Activated CD4-positive, alpha-beta T cell treated with anti-CD3 and anti-CD28 coated beads, Interleukin-2, amount 10 ng/mL, durations not matched to agents 24 days and 14 days (primary cell): ENCODE measurements at regions of chr2 and their contacts with region 1.

Region 1: DNA sequence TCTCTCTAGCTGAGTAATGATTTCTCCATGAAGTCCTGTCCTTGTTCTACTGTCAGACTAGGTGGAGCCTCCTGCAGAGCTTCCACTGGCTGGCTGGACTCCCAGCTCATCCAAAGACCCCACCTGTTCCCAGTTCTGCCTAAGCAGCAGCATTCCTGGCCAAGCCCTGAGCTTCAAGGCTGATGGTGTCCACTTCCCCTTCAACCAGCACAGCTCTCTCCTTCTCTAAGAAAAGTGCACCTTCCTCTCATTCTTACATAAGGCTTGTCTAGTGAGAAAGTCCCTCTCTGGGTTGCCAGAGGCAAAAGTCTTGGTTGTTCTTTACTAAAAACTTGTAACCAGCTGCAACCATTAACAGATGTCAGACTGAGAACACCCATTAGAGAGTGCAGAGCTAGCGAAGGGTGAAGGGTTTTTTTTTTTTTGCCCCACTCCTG is 58.9 kb downstream of the CXCR4 start:
- DNase-seq: peak; percentile 60
- H3K4me3 Mint-ChIP-seq: peak overlapping the region; percentile 21
- H3K27ac Mint-ChIP-seq: peak overlapping the region; percentile 9
- H3K4me1 Mint-ChIP-seq: peaks cover 70% of the 10 kb centered on the region
- H3K27me3 Mint-ChIP-seq: no peaks in the 10 kb centered on the region

Region 2: GRCh38 chr2:135820003-135820618 is 238.9 kb before region 1 on chr2:
- intact Hi-C with region 1: loop called (anchors 5 kb)
- DNase-seq: peak; percentile 93
- H3K4me3 Mint-ChIP-seq: peak overlapping the region; percentile 74
- H3K27ac Mint-ChIP-seq: peak overlapping the region; percentile 83
- H3K4me1 Mint-ChIP-seq: peaks cover 44% of the 10 kb centered on the region
- H3K27me3 Mint-ChIP-seq: no peaks in the 10 kb centered on the region

Region 3: GRCh38 chr2:135960656-135961551 is 98.2 kb before region 1 on chr2:
- intact Hi-C with region 1: loop called (anchors 2 kb)
- DNase-seq: peak; percentile 83
- H3K4me3 Mint-ChIP-seq: peak overlapping the region; percentile 58
- H3K27ac Mint-ChIP-seq: peak overlapping the region; percentile 94
- H3K4me1 Mint-ChIP-seq: peaks cover 56% of the 10 kb centered on the region
- H3K27me3 Mint-ChIP-seq: no peaks in the 10 kb centered on the region

Region 4: DNA sequence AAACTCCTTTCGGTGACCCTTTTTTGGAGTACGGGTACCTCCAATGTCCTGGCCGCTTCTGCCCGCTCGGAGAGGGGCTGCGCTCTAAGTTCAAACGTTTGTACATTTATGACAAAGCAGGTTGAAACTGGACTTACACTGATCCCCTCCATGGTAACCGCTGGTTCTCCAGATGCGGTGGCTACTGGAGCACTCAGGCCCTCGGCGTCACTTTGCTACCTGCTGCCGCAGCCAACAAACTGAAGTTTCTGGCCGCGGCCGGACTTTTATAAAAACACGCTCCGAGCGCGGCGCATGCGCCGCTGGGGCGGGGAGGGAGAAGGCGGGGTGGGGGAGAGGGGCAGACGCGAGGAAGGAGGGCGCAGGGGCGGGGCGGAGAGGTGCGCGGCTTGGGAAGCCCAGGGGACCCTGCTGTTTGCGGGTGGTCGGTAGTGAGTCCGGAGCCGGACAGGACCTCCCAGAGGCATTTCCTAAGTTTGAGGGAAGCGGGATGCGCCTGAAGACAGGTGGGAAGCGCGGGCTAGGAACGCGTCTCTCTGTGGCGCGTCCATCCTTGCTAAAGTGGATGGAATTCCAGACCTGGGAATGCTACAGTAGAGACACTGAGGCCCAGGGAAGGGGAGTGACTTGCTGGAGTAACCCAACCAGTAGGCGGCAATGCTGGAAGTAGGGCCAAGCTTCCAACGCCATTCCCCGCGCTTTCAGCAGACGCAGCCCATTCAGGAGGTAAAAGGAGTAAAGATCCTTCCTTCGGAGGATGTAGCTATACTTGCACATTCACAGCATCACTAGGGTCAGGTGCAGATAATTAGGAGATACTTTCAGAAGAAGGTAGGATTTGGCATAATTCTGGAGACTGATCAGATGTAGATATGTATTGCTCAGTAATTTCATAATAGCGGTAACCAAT is 59.1 kb after region 1 on chr2 and contains the start of gene CXCR4:
- intact Hi-C with region 1: loop called (anchors 1 kb)
- DNase-seq: peak; percentile 97
- H3K4me3 Mint-ChIP-seq: peak within 1 kb of the TSS; percentile 98
- H3K27ac Mint-ChIP-seq: peak within 1 kb of the TSS; percentile 95
- H3K4me1 Mint-ChIP-seq: peaks cover 63% of the 10 kb centered on the region
- H3K27me3 Mint-ChIP-seq: peaks cover 35% of the 10 kb centered on the region
- total RNA-seq, gene CXCR4: 88.8 and 92.7 TPM in 2 replicates

Region 5: DNA sequence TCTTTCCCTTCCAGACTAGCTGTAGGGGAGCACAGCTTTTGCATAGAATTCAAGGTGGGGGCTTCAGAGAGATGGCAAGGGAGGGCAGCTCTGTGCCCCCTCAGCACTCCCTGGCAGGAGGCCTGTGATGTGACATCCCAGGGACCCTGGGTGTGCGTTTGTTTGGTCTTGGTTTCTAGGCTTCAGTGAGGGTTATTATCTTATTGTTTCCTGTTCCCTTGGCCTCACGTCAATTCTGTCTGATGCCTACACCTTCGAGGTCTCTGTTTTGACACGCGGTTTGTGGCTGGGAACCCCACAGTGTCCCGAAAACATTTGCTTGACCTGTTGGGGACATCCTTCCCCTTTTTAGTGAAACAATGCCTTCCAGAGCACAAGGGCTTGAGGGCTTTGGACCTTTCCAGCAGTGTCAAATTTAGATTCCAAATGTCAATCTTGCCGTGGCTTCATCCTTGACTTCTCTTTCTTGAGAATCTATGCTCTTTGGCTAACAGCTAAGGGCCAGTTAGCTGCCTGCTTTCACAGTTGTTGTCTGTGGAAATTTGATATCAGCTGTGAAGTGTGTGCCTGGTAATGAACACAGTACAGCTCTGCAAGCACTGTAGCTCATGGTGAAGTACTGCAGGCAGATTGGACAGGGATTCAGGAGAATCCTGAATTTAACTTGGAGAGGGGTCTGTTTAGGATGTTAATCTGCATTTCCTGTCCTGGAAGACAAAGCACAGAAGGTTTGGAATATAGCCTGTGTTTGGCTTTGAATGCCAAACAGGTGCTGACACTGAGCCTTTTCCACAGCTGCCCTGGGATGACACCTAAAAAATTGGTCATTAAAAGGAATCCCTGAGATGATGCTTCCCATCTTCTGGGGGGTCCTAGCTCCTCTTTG is 167.1 kb after region 1 on chr2:
- intact Hi-C with region 1: no loop called
- DNase-seq: no peak
- H3K4me3 Mint-ChIP-seq: no peak overlapping the region
- H3K27ac Mint-ChIP-seq: no peak overlapping the region
- H3K4me1 Mint-ChIP-seq: peaks cover 6% of the 10 kb centered on the region
- H3K27me3 Mint-ChIP-seq: peaks cover 24% of the 10 kb centered on the region

Region 6: DNA sequence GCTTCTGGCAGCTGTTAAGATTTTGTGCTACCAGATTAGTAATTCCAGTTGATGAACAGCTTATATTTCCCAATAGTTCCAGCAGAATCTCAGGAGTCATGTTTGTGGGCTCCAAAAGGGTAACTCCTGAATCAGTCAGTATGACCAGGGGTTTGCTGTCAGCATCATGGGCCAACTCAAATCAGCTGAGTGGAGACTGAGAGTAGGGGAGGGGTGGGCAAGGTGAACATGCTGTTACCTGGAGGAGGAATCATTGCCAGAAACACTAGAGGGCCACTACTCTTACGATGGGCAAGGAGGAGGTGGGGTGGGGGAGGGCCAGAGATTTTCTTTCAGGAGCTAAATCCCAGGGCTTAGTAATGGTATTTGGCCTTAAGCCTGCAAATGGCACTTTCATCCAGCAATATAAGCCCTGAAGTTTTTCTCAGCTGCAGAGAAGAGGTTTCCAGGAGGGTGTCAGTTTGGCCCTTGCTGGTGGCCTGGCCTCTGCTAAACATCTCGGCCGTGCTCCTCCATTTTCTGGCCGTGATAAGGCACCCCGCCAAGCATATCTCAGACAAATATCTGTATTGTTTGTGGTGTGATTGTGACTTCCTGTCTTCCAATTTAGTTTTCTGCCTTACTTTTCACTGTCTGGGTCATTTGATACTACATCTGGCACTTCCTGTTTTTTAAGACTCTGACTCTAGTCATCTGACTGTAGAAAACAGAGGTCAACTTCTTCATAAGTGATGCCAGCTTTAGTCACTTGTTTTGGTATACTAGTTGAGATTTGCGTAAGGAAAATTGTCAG is 179.4 kb after region 1 on chr2:
- intact Hi-C with region 1: loop called (anchors 2 kb)
- DNase-seq: peak; percentile 81
- H3K4me3 Mint-ChIP-seq: peak overlapping the region; percentile 43
- H3K27ac Mint-ChIP-seq: peak overlapping the region; percentile 89
- H3K4me1 Mint-ChIP-seq: peaks cover 45% of the 10 kb centered on the region
- H3K27me3 Mint-ChIP-seq: no peaks in the 10 kb centered on the region

Region 7: GRCh38 chr2:136362676-136363390 is 303.8 kb after region 1 on chr2:
- intact Hi-C with region 1: loop called (anchors 2 kb)
- DNase-seq: peak; percentile 75
- H3K4me3 Mint-ChIP-seq: peak overlapping the region; percentile 34
- H3K27ac Mint-ChIP-seq: peak overlapping the region; percentile 57
- H3K4me1 Mint-ChIP-seq: peaks cover 40% of the 10 kb centered on the region
- H3K27me3 Mint-ChIP-seq: no peaks in the 10 kb centered on the region